Naive thymus-derived CD4-positive, alpha-beta T cell (primary cell): ENCODE measurements at regions of chr18 and their contacts with region 1.

Region 1: GRCh38 chr18:2741651-2742050 is 86.1 kb downstream of the SMCHD1 start:
- DNase-seq: no peak
- ATAC-seq: no peak
- H3K4me3 ChIP-seq: no peak overlapping the region
- H3K4me3 Mint-ChIP-seq: no peak overlapping the region
- H3K27ac ChIP-seq: no peak overlapping the region
- H3K27ac Mint-ChIP-seq: peak overlapping the region in 5 of 9 donors; percentile 19 to 74 (median 37)
- H3K4me1 ChIP-seq: no peaks in the 10 kb centered on the region
- H3K4me1 Mint-ChIP-seq: peaks cover 4 to 39% (median 23%) of the 10 kb centered on the region in 7 donors
- H3K27me3 ChIP-seq: no peaks in the 10 kb centered on the region
- H3K27me3 Mint-ChIP-seq: no peaks in the 10 kb centered on the region

Region 2: DNA sequence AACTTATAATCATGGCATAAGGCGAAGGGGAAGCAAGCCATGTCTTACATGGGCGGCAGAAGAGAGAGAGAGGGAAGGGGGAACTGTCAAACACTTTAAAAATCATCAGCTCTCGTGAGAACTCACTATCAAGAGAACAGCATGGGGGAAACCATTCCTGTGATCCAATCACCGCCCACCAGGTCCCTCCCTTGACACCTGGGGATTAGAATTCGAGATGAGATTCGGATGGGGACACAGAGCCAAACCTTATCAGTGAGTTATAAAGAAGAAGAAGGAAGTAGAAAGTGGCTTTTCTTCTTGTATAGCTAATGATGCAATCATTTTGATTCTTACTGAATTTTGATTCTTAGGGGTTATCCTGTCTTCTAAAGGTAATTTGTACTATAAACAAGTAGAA is 34.7 kb before region 1 on chr18:
- CTCF ChIA-PET with region 1: no interaction called
- POLR2A ChIA-PET with region 1: interaction called, 3 read pairs
- intact Hi-C with region 1: loop called in 1 of 2 experiments (anchors 5 kb)
- DNase-seq: no peak
- ATAC-seq: no peak
- H3K4me3 ChIP-seq: no peak overlapping the region
- H3K4me3 Mint-ChIP-seq: no peak overlapping the region
- H3K27ac ChIP-seq: no peak overlapping the region
- H3K27ac Mint-ChIP-seq: peak overlapping the region in 8 of 9 donors; percentile 12 to 87 (median 38)
- H3K4me1 ChIP-seq: no peaks in the 10 kb centered on the region
- H3K4me1 Mint-ChIP-seq: peaks cover 12 to 54% (median 47%) of the 10 kb centered on the region in 7 donors
- H3K27me3 ChIP-seq: no peaks in the 10 kb centered on the region
- H3K27me3 Mint-ChIP-seq: no peaks in the 10 kb centered on the region

Region 3: DNA sequence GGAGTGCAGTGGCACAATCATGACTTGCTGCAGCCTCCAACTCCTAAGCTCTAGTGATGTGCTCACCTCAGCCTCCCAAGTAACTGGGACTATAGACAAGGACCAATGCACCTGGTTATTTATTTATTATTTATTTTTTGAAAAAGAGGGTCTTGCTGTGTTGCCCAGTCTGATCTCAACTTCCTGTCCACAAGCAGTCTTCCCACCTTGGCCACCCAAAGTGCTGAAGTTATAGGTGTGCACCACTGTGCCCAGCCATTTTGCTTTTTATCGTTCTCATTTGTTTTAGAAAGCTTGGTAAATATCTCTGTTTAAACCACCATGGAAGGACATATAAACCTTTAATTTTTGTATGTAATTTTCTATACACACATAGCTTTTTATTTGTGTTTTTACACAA is 11.9 kb before region 1 on chr18:
- CTCF ChIA-PET with region 1: no interaction called
- POLR2A ChIA-PET with region 1: no interaction called
- intact Hi-C with region 1: loop called in 1 of 2 experiments (anchors 2 kb)
- DNase-seq: no peak
- ATAC-seq: no peak
- H3K4me3 ChIP-seq: no peak overlapping the region
- H3K4me3 Mint-ChIP-seq: no peak overlapping the region
- H3K27ac ChIP-seq: no peak overlapping the region
- H3K27ac Mint-ChIP-seq: peak overlapping the region in 2 of 9 donors; percentile 19 to 82
- H3K4me1 ChIP-seq: no peaks in the 10 kb centered on the region
- H3K4me1 Mint-ChIP-seq: peaks cover 0 to 26% (median 16%) of the 10 kb centered on the region in 7 donors
- H3K27me3 ChIP-seq: no peaks in the 10 kb centered on the region
- H3K27me3 Mint-ChIP-seq: no peaks in the 10 kb centered on the region

Region 4: GRCh38 chr18:2774669-2775068 is 33.0 kb after region 1 on chr18:
- CTCF ChIA-PET with region 1: no interaction called
- POLR2A ChIA-PET with region 1: no interaction called
- intact Hi-C with region 1: loop called in 1 of 2 experiments (anchors 5 kb)
- DNase-seq: no peak
- ATAC-seq: no peak
- H3K4me3 ChIP-seq: no peak overlapping the region
- H3K4me3 Mint-ChIP-seq: no peak overlapping the region
- H3K27ac ChIP-seq: no peak overlapping the region
- H3K27ac Mint-ChIP-seq: peak overlapping the region in 3 of 9 donors; percentile 5 to 78 (median 69)
- H3K4me1 ChIP-seq: no peaks in the 10 kb centered on the region
- H3K4me1 Mint-ChIP-seq: peaks cover 0 to 15% (median 3%) of the 10 kb centered on the region in 7 donors
- H3K27me3 ChIP-seq: no peaks in the 10 kb centered on the region
- H3K27me3 Mint-ChIP-seq: no peaks in the 10 kb centered on the region

Region 5: DNA sequence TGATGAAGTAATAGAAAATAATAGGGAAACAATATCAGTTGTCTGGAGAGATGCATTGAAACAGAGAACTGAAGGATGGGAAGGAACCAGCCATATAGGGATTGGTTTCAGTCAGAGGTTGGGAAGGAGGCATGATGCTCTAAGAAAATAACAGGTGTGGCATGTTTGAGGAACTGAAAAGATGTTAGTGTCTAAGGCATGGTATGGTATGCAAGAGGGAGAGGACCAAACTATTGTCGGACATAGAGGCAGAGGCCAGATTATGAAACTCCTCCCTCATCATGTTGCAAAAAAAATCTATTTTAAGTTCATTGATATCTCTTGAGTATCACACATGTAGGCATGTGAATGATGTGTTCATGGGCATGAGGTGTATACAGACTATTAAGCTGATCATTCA is 56.3 kb after region 1 on chr18:
- CTCF ChIA-PET with region 1: no interaction called
- POLR2A ChIA-PET with region 1: no interaction called
- intact Hi-C with region 1: loop called in 1 of 2 experiments (anchors 10 kb)
- DNase-seq: no peak
- ATAC-seq: no peak
- H3K4me3 ChIP-seq: no peak overlapping the region
- H3K4me3 Mint-ChIP-seq: no peak overlapping the region
- H3K27ac ChIP-seq: no peak overlapping the region
- H3K27ac Mint-ChIP-seq: peak overlapping the region in 3 of 9 donors; percentile 6 to 48 (median 41)
- H3K4me1 ChIP-seq: no peaks in the 10 kb centered on the region
- H3K4me1 Mint-ChIP-seq: peaks cover 3 to 21% (median 9%) of the 10 kb centered on the region in 7 donors
- H3K27me3 ChIP-seq: no peaks in the 10 kb centered on the region
- H3K27me3 Mint-ChIP-seq: no peaks in the 10 kb centered on the region